ENCODE measurements at regions of chr7 and their contacts with region 1.

Region 1: GRCh38 chr7:129366-130221 is 62.8 kb upstream of the FAM20C start:
- DNase-seq: no peak
- ATAC-seq: peak; percentile 75

Region 2: DNA sequence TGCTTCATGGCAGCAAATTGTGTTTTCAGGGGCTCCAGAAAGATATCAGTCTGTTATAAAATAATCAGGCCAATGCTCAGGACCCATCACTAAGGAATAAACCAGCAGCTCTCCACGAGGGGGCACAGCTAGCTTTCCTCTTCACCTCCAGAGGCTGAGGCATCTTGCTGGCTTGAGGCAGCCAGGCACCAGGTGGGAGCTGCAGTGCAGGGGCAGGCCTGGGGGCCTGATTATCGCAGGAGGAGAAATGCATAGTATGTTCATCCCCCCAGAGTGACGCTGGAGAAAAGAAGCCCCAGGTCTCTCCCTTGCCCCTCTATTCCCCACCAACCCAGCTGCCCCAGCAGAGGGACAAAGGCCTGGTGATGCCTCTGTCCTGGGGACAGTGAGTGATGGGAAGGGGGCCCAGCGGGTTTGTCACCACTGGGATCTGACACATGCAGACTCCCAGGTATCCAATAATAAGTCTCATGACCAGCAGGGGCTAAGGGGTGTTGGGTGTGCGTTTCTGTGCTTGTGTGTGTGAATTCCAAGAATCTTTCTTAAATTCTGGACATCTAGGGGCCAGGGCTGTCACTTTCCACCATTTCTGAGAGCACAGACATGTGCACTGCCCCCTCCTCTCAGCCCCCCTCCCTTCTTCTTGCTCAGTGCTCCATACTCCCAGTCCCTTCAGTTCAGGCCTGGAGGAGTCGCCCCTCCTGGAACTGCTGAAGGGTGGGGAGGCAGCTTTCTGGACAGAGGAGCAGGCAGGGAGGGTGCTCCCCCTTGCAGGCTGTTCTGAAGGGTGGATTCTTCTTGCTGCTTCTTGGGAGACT is 65.3 kb before region 1 on chr7:
- intact Hi-C with region 1: loop called (anchors 2 kb)
- DNase-seq: peak; percentile 85
- ATAC-seq: peak; percentile 84

Region 3: GRCh38 chr7:974820-975681 is 845.5 kb after region 1 on chr7 and contains the start of gene COX19:
- intact Hi-C with region 1: no loop called
- DNase-seq: peak; percentile 92
- ATAC-seq: peak; percentile 89
- total RNA-seq, gene COX19: 18.3 TPM

Region 4: DNA sequence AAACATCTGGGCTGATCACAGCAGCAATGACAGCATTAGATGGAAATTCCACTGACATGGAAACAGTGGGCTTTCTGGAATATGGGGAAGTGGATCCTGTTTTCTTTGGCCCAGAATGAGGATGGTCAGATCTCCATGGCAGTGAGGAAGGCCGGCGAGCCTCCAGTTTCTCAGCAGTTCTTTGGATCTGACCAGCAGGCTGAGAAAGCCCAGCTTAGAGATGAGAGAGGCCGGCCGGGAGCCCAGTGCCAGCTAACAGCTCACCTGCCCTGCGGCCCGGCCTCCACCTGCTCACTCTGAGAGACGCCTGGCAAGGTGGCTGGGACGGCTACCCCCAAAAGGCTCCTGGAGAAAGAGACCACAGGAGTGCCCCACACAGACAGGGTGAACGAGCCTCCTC is 982.5 kb after region 1 on chr7:
- intact Hi-C with region 1: no loop called
- DNase-seq: peak; percentile 49
- ATAC-seq: no peak

Region 5: GRCh38 chr7:1951159-1951536 is 1821.6 kb after region 1 on chr7:
- intact Hi-C with region 1: no loop called
- DNase-seq: no peak
- ATAC-seq: no peak